RWPE1 (cell line): ENCODE measurements at regions of chr2 and their contacts with region 1.

Region 1: DNA sequence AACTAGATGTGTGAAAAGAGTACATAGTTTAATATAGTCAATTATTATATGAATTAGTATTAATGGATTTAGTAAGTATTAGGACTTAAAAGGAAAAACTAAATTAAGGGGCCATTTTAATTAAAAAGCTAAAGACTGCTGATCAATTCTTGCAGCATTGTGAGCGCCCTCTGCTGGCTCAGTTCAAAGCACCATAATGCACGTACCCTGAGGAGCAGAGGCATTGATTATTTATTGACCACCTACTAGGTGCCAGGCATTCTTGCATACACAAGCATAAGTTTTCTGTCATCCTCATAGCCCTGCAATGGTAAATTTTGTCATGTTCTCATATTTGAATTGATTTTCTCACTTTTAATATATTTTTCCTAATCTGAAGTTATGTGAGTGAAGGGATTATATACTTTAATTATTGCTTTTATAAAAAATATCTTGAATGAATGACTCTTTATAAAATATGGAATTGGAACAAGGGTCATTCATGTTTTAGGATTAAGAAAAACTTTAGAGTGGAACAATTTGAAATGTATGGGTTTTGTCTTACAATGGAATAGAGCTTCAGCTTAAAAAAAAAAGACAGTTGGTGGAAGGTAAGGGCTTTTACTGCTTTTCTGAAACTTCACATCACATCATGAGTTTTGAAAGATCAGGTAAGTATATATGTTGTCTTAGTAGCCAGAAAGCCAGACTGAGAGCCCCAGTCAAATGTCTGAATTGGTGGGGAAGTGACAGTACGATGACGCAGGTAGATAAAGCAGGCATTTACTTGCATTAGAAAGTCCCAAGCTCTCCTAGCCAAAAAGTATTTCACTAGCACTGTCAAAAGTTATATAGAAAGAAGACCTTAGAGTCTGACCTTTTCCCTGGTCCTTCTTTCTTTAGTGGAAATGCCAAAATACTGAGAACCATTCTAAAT is 9.7 kb downstream of the ITGA4 start:
- DNase-seq: peak; percentile 9
- H3K27ac ChIP-seq: no peak overlapping the region
- CTCF ChIP-seq: peak; percentile 84

Region 2: DNA sequence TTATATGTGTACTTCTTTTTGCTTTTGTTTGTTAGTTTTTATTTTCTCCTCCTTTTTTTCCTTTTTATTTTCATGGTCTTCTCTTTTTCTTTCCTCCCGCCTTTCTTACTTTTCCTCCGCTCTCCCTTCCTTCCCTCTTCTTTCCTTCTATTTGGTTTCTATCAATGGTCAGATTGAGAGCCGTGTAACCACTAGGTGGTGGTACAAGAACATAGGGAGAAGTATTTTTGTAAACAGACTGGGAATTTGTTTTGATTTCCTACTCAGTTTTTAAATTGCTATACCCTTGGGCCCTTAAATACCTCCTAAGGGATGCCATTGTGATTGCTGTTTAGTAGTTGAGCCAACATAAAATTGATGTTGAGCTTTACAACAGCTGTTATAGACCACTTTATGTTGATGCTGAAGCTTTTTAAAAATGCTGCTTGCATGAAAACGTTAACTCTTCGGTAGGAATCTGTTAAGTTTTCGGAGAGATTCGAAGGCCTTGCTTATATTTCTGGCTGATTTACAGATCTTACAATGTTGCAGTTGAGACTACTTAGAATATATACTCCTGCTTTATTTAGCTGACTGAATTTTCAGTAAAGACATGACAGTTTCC is 362.3 kb before region 1 on chr2:
- CTCF ChIA-PET with region 1: interaction called, 14 read pairs
- POLR2A ChIA-PET with region 1: no interaction called
- DNase-seq: peak; percentile 38
- H3K27ac ChIP-seq: no peak overlapping the region
- CTCF ChIP-seq: peak; percentile 44

Region 3: DNA sequence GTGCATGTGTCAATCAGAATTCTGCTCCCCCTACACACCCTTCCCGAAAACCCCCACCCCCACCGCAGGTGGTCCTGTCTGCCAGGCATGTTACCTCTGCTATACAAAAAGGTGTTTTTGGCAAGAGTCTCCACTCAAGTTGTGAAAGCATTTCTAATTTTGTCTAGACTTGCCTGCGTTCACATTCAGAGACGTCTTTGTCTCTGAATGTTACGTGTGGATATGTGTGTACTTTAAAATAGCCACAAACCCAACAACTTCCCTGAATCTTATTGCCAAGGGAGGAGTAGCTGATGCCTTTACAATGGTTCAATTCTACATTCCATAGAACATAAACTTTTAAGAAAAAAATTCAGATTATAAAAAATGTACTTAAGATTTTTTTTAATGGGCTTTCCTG is 56.8 kb after region 1 on chr2:
- CTCF ChIA-PET with region 1: no interaction called
- POLR2A ChIA-PET with region 1: no interaction called
- DNase-seq: peak; percentile 2
- H3K27ac ChIP-seq: no peak overlapping the region
- CTCF ChIP-seq: no peak

Region 4: GRCh38 chr2:181823405-181823804 is 356.5 kb after region 1 on chr2:
- CTCF ChIA-PET with region 1: no interaction called
- POLR2A ChIA-PET with region 1: no interaction called
- DNase-seq: no peak
- H3K27ac ChIP-seq: no peak overlapping the region
- CTCF ChIP-seq: no peak